Mammary epithelial cell (primary cell): ENCODE measurements at regions of chr16 and their contacts with region 1.

Region 1: DNA sequence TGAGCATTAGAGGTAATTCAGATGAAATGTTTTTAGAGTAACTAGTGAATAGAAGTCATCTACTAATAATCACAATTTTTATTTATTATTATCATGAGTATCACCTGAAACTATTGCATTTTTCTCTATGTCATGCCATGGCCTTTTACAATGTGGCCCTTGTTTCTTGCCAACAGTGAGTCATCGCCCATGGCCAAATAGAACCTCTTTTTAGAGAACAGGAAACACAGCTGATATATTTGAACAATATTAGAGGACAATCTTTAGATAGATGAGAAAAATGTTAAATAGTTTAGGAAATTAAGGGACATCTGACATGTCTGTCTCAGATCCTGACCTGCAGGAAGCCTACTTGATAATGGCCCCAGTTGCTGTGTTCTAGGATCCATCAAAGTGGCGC is 1584.4 kb upstream of the GOT2 start:
- DNase-seq: peak; percentile 38
- H3K4me3 ChIP-seq: no peak overlapping the region
- H3K27ac ChIP-seq: no peak overlapping the region
- H3K4me1 ChIP-seq: no peaks in the 10 kb centered on the region
- H3K27me3 ChIP-seq: no peaks in the 10 kb centered on the region
- CTCF ChIP-seq: no peak

Region 2: GRCh38 chr16:60510941-60511340 is 192.5 kb after region 1 on chr16:
- CTCF ChIA-PET with region 1: no interaction called
- dilution Hi-C with region 1: no loop called
- in situ Hi-C with region 1: no loop called
- intact Hi-C with region 1: no loop called
- DNase-seq: no peak
- H3K4me3 ChIP-seq: no peak overlapping the region
- H3K27ac ChIP-seq: no peak overlapping the region
- H3K4me1 ChIP-seq: no peaks in the 10 kb centered on the region
- H3K27me3 ChIP-seq: no peaks in the 10 kb centered on the region
- CTCF ChIP-seq: no peak

Region 3: DNA sequence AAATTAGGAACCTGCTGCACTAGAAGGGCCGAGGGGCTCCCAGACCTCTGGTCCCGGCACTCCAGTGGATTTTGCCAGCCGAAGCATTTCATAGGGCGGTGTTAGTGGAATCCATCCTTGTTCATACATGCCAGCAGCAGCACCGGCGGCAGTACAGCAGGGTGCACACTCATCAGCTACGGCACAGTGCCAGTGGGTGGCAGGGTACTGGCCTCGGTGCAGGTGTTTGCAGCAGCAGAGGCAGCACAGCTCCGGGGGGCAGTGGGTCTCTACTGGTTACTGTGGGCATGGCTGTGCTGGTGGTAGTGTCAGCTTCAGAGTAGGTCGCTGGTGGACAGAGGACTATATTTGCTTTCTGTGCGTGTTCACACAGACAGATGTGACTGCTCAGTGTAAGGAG is 732.1 kb after region 1 on chr16:
- CTCF ChIA-PET with region 1: interaction called, 10 read pairs
- dilution Hi-C with region 1: no loop called
- in situ Hi-C with region 1: no loop called
- intact Hi-C with region 1: no loop called
- DNase-seq: no peak
- H3K4me3 ChIP-seq: no peak overlapping the region
- H3K27ac ChIP-seq: no peak overlapping the region
- H3K4me1 ChIP-seq: no peaks in the 10 kb centered on the region
- H3K27me3 ChIP-seq: no peaks in the 10 kb centered on the region
- CTCF ChIP-seq: no peak